ENCODE measurements at regions of chr2 and their contacts with region 1.

Region 1: DNA sequence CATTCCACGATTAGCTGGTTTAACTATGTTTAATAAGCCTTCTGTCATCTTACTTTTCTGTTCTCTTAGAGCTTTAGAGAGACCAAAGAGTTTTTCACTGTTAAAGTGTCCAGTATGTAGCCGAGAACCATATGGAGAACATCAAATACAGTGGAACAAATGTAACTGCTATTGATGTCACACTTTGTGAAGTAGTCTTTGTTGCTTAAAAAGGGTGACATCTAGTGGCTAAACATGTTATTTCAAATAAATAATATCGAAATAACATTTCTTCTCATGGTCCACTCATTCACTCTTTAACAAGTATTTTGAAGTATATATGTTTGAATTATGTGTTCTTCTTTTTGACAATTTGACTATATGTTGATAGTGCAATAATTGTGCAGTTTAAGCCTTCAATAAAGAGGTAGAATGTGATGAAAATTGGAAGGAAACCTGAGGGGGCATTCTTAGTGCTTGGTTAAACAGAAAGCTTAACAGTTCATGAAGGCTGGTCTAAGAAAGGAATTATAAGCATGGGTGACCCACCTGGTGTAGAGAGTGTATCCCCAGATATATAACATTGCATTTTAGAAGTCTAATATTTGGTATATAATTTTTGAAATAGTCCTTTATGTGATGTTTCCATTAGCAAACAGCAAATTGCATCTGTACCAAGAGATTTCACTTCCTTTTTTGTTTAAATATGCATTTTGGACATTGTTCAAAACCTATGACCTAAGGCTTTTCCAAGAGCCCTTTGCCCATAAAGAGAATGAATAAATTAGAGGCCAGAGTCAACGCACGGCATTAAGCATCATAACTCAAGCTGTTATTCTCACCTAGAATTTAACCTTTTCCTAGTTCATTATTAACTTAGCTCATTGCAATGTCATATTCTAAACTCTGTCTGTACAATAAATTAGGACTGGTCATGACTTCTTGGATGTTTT is 112.1 kb downstream of the KYNU start:
- DNase-seq: no peak
- ATAC-seq: no peak
- H3K4me3 Mint-ChIP-seq: no peak overlapping the region
- H3K27ac Mint-ChIP-seq: no peak overlapping the region
- H3K4me1 Mint-ChIP-seq: no peaks in the 10 kb centered on the region
- H3K27me3 Mint-ChIP-seq: peaks cover 2% of the 10 kb centered on the region

Region 2: GRCh38 chr2:142140434-142140845 is 849.1 kb before region 1 on chr2:
- CTCF ChIA-PET with region 1: no interaction called
- POLR2A ChIA-PET with region 1: no interaction called
- intact Hi-C with region 1: loop called in 1 of 2 experiments (anchors 10 kb)
- DNase-seq: no peak
- ATAC-seq: no peak
- H3K4me3 Mint-ChIP-seq: no peak overlapping the region
- H3K27ac Mint-ChIP-seq: no peak overlapping the region
- H3K4me1 Mint-ChIP-seq: no peaks in the 10 kb centered on the region
- H3K27me3 Mint-ChIP-seq: no peaks in the 10 kb centered on the region

Region 3: GRCh38 chr2:142682528-142682927 is 307.0 kb before region 1 on chr2:
- CTCF ChIA-PET with region 1: no interaction called
- POLR2A ChIA-PET with region 1: no interaction called
- intact Hi-C with region 1: loop called in 1 of 2 experiments (anchors 10 kb)
- DNase-seq: no peak
- ATAC-seq: no peak
- H3K4me3 Mint-ChIP-seq: no peak overlapping the region
- H3K27ac Mint-ChIP-seq: no peak overlapping the region
- H3K4me1 Mint-ChIP-seq: no peaks in the 10 kb centered on the region
- H3K27me3 Mint-ChIP-seq: no peaks in the 10 kb centered on the region

Region 4: DNA sequence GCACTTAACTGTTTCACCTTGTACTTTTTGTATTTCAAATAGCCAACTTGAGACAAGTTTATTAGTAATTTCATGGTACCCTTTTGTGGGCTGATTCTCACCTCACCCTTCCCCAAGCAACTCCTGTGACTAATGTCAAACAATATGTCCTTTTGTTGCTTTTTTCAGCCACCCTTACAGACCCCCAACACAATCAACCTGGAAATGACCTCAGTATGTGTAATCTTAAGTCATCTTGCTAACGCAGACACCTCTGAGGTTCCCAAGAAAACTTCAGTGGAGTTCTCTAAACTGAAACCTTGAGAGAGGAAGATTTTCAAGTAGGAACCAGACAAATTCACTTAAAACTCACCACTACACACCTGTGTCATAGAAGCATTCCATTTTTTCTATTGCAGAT is 42.6 kb before region 1 on chr2:
- CTCF ChIA-PET with region 1: no interaction called
- POLR2A ChIA-PET with region 1: no interaction called
- intact Hi-C with region 1: no loop called
- DNase-seq: no peak
- ATAC-seq: no peak
- H3K4me3 Mint-ChIP-seq: no peak overlapping the region
- H3K27ac Mint-ChIP-seq: no peak overlapping the region
- H3K4me1 Mint-ChIP-seq: no peaks in the 10 kb centered on the region
- H3K27me3 Mint-ChIP-seq: peaks cover 5% of the 10 kb centered on the region

Region 5: GRCh38 chr2:143321994-143322393 is 332.5 kb after region 1 on chr2:
- CTCF ChIA-PET with region 1: no interaction called
- POLR2A ChIA-PET with region 1: no interaction called
- intact Hi-C with region 1: no loop called
- DNase-seq: no peak
- ATAC-seq: no peak
- H3K4me3 Mint-ChIP-seq: no peak overlapping the region
- H3K27ac Mint-ChIP-seq: no peak overlapping the region
- H3K4me1 Mint-ChIP-seq: peaks cover 45% of the 10 kb centered on the region
- H3K27me3 Mint-ChIP-seq: no peaks in the 10 kb centered on the region

Measured in activated CD4-positive, alpha-beta T cell treated with anti-CD3 and anti-CD28 coated beads for 36 hours (primary cell).